GM12878 (cell line): ENCODE measurements at regions of chr2 and their contacts with region 1.

Region 1: DNA sequence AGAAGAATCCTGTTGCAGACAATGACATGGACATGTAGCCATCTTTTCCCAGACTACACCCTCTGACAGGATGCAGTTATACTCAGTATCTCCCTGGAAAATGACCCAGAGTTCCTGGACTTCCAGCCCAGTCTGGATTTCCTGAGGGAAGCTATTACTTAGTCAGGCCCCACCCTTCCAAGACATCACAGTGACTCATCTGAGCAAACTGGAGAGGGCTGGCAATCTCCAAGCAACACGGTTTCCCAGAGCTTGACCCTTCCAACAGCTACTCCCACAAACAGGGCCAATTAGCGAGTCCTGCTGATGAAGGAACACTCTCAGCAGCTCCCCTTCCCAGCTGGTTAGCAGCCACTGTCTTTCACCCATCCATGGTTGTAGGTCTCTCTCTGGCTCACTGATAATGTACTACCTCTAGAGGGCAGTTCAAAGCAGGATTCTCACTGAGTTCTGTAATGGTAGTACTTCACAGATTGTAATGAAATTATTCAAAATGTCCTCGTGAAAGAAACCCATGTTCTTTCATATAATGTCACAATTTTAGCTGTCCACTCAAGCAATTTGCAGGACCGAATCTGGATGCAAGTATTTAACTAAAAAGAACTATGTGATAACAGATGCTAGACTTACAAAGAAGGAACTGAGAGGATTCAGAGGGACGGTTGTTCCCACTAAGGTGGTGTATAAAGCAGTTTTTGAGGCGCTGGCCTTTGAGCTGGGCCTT is 110.2 kb downstream of the MDH1 start:
- DNase-seq: no peak
- ATAC-seq: peak; percentile 99
- H3K4me3 ChIP-seq: no peak overlapping the region
- H3K27ac ChIP-seq: no peak overlapping the region
- H3K4me1 ChIP-seq: no peaks in the 10 kb centered on the region
- H3K27me3 ChIP-seq: no peaks in the 10 kb centered on the region
- CTCF ChIP-seq: peak; percentile 55 to 71 (median 67)
- EP300 ChIP-seq: no peak
- POLR2A ChIP-seq: no peak
- RAD21 ChIP-seq: peak; percentile 77

Region 2: DNA sequence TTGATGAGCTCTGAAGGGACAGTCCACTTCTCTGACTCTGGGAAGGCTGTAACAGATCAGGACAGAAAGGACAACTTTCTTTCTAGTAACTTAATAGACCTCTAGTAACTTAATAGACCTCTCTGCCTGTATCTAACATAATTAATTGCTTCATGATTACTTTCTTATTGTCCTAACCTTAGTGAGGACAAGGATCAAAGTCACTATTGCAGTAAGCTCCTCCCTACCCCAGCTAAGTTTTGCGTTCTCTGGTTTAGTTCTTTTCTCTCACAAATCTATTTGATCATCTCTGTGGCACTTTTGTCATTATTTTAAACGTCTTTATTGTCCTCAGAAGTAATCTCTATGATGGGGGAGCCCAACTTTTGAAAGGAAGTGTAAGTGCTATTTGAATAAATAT is 17.2 kb after region 1 on chr2:
- CTCF ChIA-PET with region 1: interaction called, 16 read pairs
- POLR2A ChIA-PET with region 1: no interaction called
- RAD21 ChIA-PET with region 1: interaction called, 3 read pairs
- SMC1A ChIA-PET with region 1: interaction called, 4 read pairs
- in situ Hi-C with region 1: no loop called
- intact Hi-C with region 1: no loop called
- DNase-seq: no peak
- ATAC-seq: no peak
- H3K4me3 ChIP-seq: no peak overlapping the region
- H3K27ac ChIP-seq: no peak overlapping the region
- H3K4me1 ChIP-seq: no peaks in the 10 kb centered on the region
- H3K27me3 ChIP-seq: no peaks in the 10 kb centered on the region
- CTCF ChIP-seq: no peak
- EP300 ChIP-seq: no peak
- POLR2A ChIP-seq: no peak
- RAD21 ChIP-seq: no peak

Region 3: GRCh38 chr2:63861220-63861822 is 162.3 kb after region 1 on chr2:
- CTCF ChIA-PET with region 1: interaction called, 170 read pairs
- POLR2A ChIA-PET with region 1: interaction called, 3 read pairs
- RAD21 ChIA-PET with region 1: interaction called, 38 read pairs
- SMC1A ChIA-PET with region 1: interaction called, 32 read pairs
- in situ Hi-C with region 1: loop called (anchors 5 kb)
- intact Hi-C with region 1: no loop called
- DNase-seq: no peak
- ATAC-seq: peak; percentile 81
- H3K4me3 ChIP-seq: no peak overlapping the region
- H3K27ac ChIP-seq: no peak overlapping the region
- H3K4me1 ChIP-seq: no peaks in the 10 kb centered on the region
- H3K27me3 ChIP-seq: no peaks in the 10 kb centered on the region
- CTCF ChIP-seq: peak; percentile 42 to 61 (median 49); a peak in 5 of 6 replicates
- EP300 ChIP-seq: no peak
- POLR2A ChIP-seq: no peak
- RAD21 ChIP-seq: peak; percentile 70

Region 4: GRCh38 chr2:63881205-63881604 is 182.2 kb after region 1 on chr2:
- CTCF ChIA-PET with region 1: interaction called, 16 read pairs
- POLR2A ChIA-PET with region 1: no interaction called
- RAD21 ChIA-PET with region 1: no interaction called
- SMC1A ChIA-PET with region 1: no interaction called
- in situ Hi-C with region 1: no loop called
- intact Hi-C with region 1: no loop called
- DNase-seq: no peak
- ATAC-seq: no peak
- H3K4me3 ChIP-seq: no peak overlapping the region
- H3K27ac ChIP-seq: no peak overlapping the region
- H3K4me1 ChIP-seq: no peaks in the 10 kb centered on the region
- H3K27me3 ChIP-seq: no peaks in the 10 kb centered on the region
- CTCF ChIP-seq: no peak
- EP300 ChIP-seq: no peak
- POLR2A ChIP-seq: no peak
- RAD21 ChIP-seq: no peak

Region 5: DNA sequence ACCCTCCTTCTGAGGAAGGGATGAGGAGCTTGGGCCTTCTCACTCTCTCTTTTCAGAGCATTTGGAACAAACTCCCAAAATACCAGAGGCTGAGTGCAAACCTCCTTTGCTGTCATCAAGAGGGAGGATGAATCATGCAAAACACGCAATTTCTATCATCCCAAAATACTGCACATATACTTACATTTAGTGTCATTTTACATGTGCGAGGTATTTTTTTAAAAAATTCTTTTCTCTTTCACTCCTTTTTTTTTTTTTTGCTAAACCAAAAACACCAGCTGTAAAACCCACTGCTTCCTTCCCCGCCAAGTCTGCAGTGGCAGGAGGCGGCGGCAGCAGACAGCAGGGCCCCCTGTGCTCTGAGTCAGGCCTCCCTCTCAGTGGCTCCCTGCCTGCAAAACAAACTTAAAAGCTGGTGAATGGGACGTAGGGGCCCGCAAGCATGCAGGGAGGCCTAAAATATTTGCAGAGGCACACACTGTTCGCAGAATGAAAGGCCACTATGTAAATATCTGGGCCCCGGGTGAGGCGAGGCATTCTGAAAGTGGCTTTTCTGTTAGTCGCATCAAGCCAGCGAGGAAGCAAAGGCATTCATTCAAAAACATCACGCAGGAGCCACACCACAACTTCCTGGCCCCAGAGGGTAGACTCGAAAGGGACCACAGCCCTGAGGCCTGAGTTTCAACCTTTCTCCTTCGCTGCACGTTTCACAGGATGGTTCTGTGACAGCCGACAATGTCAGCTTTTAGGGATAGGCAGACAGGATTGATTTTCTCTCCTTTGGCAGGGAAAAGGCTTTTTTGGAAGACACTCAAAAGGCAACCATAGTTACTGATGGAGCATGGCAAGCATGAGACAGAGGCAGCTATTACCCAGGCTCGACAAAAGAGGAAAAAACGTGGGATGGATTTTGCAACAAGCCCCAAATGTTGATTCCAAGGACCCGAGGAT is 1602.0 kb after region 1 on chr2:
- CTCF ChIA-PET with region 1: no interaction called
- POLR2A ChIA-PET with region 1: no interaction called
- RAD21 ChIA-PET with region 1: no interaction called
- SMC1A ChIA-PET with region 1: no interaction called
- in situ Hi-C with region 1: no loop called
- intact Hi-C with region 1: no loop called
- DNase-seq: peak; percentile 61
- ATAC-seq: peak; percentile 84
- H3K4me3 ChIP-seq: peak overlapping the region; percentile 17; the same call in 1 of the 2 replicates
- H3K27ac ChIP-seq: peak overlapping the region; percentile 38
- H3K4me1 ChIP-seq: peaks cover 40% of the 10 kb centered on the region
- H3K27me3 ChIP-seq: no peaks in the 10 kb centered on the region
- CTCF ChIP-seq: no peak
- EP300 ChIP-seq: no peak
- POLR2A ChIP-seq: no peak
- RAD21 ChIP-seq: no peak